CD8-positive, alpha-beta memory T cell (primary cell): ENCODE measurements at regions of chr12 and their contacts with region 1.

Region 1: DNA sequence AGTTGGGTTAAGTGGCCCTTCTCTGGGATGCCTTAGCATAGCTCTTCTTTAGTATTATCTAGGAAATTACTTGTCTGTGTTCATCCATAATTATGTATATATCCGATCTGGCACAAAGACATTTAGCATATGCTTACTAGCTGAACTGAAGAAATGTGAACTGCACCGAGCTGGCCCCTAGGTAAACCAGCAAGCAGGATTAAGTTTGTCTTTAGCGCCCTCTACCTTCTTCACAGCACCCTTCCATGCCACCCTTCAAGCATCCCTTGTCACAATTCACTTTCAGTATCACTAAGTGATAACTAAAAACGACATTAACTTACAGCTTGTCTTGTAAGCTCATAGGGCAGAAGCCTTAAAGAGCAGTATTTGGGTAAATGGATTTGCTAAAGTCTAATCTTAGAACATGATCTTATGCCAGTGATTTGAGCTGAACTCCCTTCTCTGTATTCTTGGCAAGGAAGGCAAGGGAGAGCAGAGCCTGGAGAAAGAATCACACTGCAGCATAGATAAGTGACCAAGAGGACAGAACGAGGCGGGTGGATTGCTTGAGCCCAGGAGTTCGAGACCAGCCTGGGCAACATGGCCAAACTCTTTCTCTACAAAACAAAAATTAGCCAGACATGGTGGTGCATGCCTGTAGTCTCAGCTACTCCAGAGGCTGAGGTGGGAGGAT is 2.6 kb upstream of the HAL start:
- DNase-seq: peak; percentile 9 to 61 (median 48)
- H3K4me3 ChIP-seq: no peak overlapping the region
- H3K4me3 Mint-ChIP-seq: no peak overlapping the region
- H3K27ac ChIP-seq: no peak overlapping the region
- H3K27ac Mint-ChIP-seq: peak overlapping the region in 3 of 8 donors; percentile 12 to 77 (median 72)
- H3K4me1 ChIP-seq: no peaks in the 10 kb centered on the region
- H3K4me1 Mint-ChIP-seq: peaks cover 2 to 6% (median 3%) of the 10 kb centered on the region in 3 donors
- H3K27me3 ChIP-seq: no peaks in the 10 kb centered on the region
- H3K27me3 Mint-ChIP-seq: no peaks in the 10 kb centered on the region

Region 2: GRCh38 chr12:95918194-95918993 is 80.4 kb before region 1 on chr12:
- CTCF ChIA-PET with region 1: interaction called, 59 read pairs
- POLR2A ChIA-PET with region 1: interaction called, 4 read pairs
- DNase-seq: peak in 4 of 5 donors; percentile 16 to 63 (median 51)
- H3K4me3 ChIP-seq: no peak overlapping the region
- H3K4me3 Mint-ChIP-seq: no peak overlapping the region
- H3K27ac ChIP-seq: no peak overlapping the region
- H3K27ac Mint-ChIP-seq: no peak overlapping the region
- H3K4me1 ChIP-seq: no peaks in the 10 kb centered on the region
- H3K4me1 Mint-ChIP-seq: no peaks in the 10 kb centered on the region
- H3K27me3 ChIP-seq: no peaks in the 10 kb centered on the region
- H3K27me3 Mint-ChIP-seq: peaks cover 3% of the 10 kb centered on the region in 2 donors

Region 3: DNA sequence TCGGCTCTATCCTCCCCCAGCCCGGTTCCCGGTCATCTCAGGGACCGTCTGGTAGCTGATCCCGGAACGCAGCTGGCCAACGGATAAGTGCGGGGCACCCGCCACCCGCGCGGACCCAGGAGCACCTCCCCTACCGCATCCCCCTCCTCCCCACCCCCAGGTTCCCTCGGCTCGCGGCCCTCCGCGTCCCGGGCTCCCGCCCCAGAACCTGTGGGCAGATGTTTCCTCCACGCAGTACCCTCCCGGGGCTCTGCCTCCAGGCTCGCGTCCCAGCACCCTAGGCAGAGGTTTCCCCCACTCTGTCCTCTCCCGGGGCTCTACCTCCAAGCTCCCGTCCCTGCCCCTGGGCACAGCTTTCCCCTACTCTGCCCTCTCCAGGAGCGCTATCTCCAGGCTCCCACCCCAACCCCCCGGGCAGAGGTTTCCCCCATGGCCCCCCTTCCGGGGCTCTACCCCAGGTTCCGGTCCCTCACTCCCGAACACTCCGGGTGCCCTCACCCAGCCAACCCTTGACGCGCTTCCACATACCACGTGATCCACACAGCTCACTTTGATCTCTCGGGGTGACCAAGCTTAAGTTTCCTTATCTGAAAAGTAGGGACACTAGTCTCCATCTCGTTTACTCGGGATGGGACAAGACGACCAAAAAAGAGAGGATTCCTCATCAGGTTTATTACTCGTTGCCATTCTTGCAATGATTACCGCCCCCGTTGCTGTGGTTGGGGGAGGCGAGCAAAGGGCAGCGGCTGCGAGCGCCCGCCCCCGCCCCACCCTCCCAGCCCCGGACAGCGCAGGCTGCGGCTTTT is 56.0 kb before region 1 on chr12 and contains the start of gene CCDC38:
- CTCF ChIA-PET with region 1: interaction called, 14 read pairs
- POLR2A ChIA-PET with region 1: interaction called, 4 read pairs
- DNase-seq: peak; percentile 69 to 90 (median 80)
- H3K4me3 ChIP-seq: peak within 1 kb of the TSS; percentile 90
- H3K4me3 Mint-ChIP-seq: peak within 1 kb of the TSS; percentile 91 to 97 (median 96)
- H3K27ac ChIP-seq: peak within 1 kb of the TSS; percentile 60
- H3K27ac Mint-ChIP-seq: peak within 1 kb of the TSS; percentile 84 to 97 (median 91)
- H3K4me1 ChIP-seq: peaks cover 9% of the 10 kb centered on the region
- H3K4me1 Mint-ChIP-seq: peaks cover 9 to 14% (median 12%) of the 10 kb centered on the region in 3 donors
- H3K27me3 ChIP-seq: no peaks in the 10 kb centered on the region
- H3K27me3 Mint-ChIP-seq: peaks cover 0 to 1% of the 10 kb centered on the region in 2 donors
- total RNA-seq, gene CCDC38: 0.24 to 0.46 TPM

Region 4: GRCh38 chr12:95986635-95987570 is 11.8 kb before region 1 on chr12:
- CTCF ChIA-PET with region 1: interaction called, 19 read pairs
- POLR2A ChIA-PET with region 1: no interaction called
- DNase-seq: no peak
- H3K4me3 ChIP-seq: no peak overlapping the region
- H3K4me3 Mint-ChIP-seq: no peak overlapping the region
- H3K27ac ChIP-seq: no peak overlapping the region
- H3K27ac Mint-ChIP-seq: no peak overlapping the region
- H3K4me1 ChIP-seq: no peaks in the 10 kb centered on the region
- H3K4me1 Mint-ChIP-seq: no peaks in the 10 kb centered on the region
- H3K27me3 ChIP-seq: no peaks in the 10 kb centered on the region
- H3K27me3 Mint-ChIP-seq: no peaks in the 10 kb centered on the region

Region 5: DNA sequence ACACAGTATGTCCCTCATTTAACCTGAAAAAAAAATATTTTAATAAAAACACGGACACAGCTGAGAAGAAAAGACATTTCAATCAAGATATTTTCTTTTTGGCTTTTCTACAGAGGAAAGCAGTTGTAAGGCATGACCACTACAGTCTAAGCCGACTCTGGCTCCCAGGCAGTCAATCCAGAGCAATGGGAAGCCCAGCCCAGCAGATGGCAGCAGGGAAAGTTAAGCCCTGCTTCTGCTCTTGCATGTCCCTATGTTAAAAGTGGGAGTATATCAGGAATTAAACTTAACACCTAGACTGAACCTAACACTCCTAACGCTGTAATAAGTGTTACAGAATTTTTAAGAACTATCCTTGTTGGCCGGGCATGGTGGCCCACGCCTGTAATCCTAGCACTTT is 16.9 kb after region 1 on chr12:
- CTCF ChIA-PET with region 1: interaction called, 22 read pairs
- POLR2A ChIA-PET with region 1: no interaction called
- DNase-seq: no peak
- H3K4me3 ChIP-seq: no peak overlapping the region
- H3K4me3 Mint-ChIP-seq: no peak overlapping the region
- H3K27ac ChIP-seq: no peak overlapping the region
- H3K27ac Mint-ChIP-seq: no peak overlapping the region
- H3K4me1 ChIP-seq: no peaks in the 10 kb centered on the region
- H3K4me1 Mint-ChIP-seq: no peaks in the 10 kb centered on the region
- H3K27me3 ChIP-seq: no peaks in the 10 kb centered on the region
- H3K27me3 Mint-ChIP-seq: no peaks in the 10 kb centered on the region